Prostate gland (tissue), 2 donors: ENCODE measurements at regions of chrX and their contacts with region 1.

Region 1: GRCh38 chrX:87664381-87664780 is 146.8 kb downstream of the KLHL4 start:
- DNase-seq: no peak
- H3K4me3 ChIP-seq: no peak overlapping the region
- H3K27ac ChIP-seq: no peak overlapping the region
- H3K4me1 ChIP-seq: no peaks in the 10 kb centered on the region
- H3K27me3 ChIP-seq: no peaks in the 10 kb centered on the region
- CTCF ChIP-seq: peak in 3 of 4 experiments; percentile 9 to 28 (median 11)
- POLR2A ChIP-seq: no peak

Region 2: GRCh38 chrX:87338510-87338909 is 325.9 kb before region 1 on chrX:
- intact Hi-C with region 1: loop called (anchors 5 kb)
- DNase-seq: no peak
- H3K4me3 ChIP-seq: no peak overlapping the region
- H3K27ac ChIP-seq: no peak overlapping the region
- H3K4me1 ChIP-seq: no peaks in the 10 kb centered on the region
- H3K27me3 ChIP-seq: no peaks in the 10 kb centered on the region
- CTCF ChIP-seq: peak in 2 of 4 experiments; percentile 6 to 12
- POLR2A ChIP-seq: no peak

Region 3: GRCh38 chrX:87434618-87435017 is 229.8 kb before region 1 on chrX:
- intact Hi-C with region 1: no loop called
- DNase-seq: no peak
- H3K4me3 ChIP-seq: no peak overlapping the region
- H3K27ac ChIP-seq: no peak overlapping the region
- H3K4me1 ChIP-seq: no peaks in the 10 kb centered on the region
- H3K27me3 ChIP-seq: no peaks in the 10 kb centered on the region
- CTCF ChIP-seq: no peak
- POLR2A ChIP-seq: no peak